CD4-positive, alpha-beta memory T cell (primary cell): ENCODE measurements at regions of chrX and their contacts with region 1.

Region 1: GRCh38 chrX:102950908-102951866 is 14.1 kb downstream of the RAB40AL start:
- DNase-seq: peak; percentile 44 to 59 (median 50)
- H3K4me3 ChIP-seq: no peak overlapping the region
- H3K4me3 Mint-ChIP-seq: peak overlapping the region; percentile 71 to 89 (median 80)
- H3K27ac ChIP-seq: no peak overlapping the region
- H3K27ac Mint-ChIP-seq: peak overlapping the region in 2 of 7 donors; percentile 15 to 30
- H3K4me1 ChIP-seq: no peaks in the 10 kb centered on the region
- H3K4me1 Mint-ChIP-seq: peaks cover 3 to 6% (median 5%) of the 10 kb centered on the region in 4 donors
- H3K27me3 ChIP-seq: no peaks in the 10 kb centered on the region
- H3K27me3 Mint-ChIP-seq: peaks cover 0 to 1% of the 10 kb centered on the region in 2 donors

Region 2: GRCh38 chrX:102697494-102697893 is 253.7 kb before region 1 on chrX:
- CTCF ChIA-PET with region 1: no interaction called
- POLR2A ChIA-PET with region 1: no interaction called
- intact Hi-C with region 1: no loop called
- DNase-seq: no peak
- H3K4me3 ChIP-seq: no peak overlapping the region
- H3K4me3 Mint-ChIP-seq: no peak overlapping the region
- H3K27ac ChIP-seq: no peak overlapping the region
- H3K27ac Mint-ChIP-seq: no peak overlapping the region
- H3K4me1 ChIP-seq: no peaks in the 10 kb centered on the region
- H3K4me1 Mint-ChIP-seq: no peaks in the 10 kb centered on the region
- H3K27me3 ChIP-seq: no peaks in the 10 kb centered on the region
- H3K27me3 Mint-ChIP-seq: no peaks in the 10 kb centered on the region

Region 3: GRCh38 chrX:102934624-102935023 is 16.6 kb before region 1 on chrX:
- CTCF ChIA-PET with region 1: interaction called, 15 read pairs
- POLR2A ChIA-PET with region 1: no interaction called
- intact Hi-C with region 1: no loop called
- DNase-seq: peak in 4 of 5 donors; percentile 17 to 39 (median 24)
- H3K4me3 ChIP-seq: no peak overlapping the region
- H3K4me3 Mint-ChIP-seq: no peak overlapping the region
- H3K27ac ChIP-seq: no peak overlapping the region
- H3K27ac Mint-ChIP-seq: no peak overlapping the region
- H3K4me1 ChIP-seq: no peaks in the 10 kb centered on the region
- H3K4me1 Mint-ChIP-seq: no peaks in the 10 kb centered on the region
- H3K27me3 ChIP-seq: no peaks in the 10 kb centered on the region
- H3K27me3 Mint-ChIP-seq: no peaks in the 10 kb centered on the region

Region 4: DNA sequence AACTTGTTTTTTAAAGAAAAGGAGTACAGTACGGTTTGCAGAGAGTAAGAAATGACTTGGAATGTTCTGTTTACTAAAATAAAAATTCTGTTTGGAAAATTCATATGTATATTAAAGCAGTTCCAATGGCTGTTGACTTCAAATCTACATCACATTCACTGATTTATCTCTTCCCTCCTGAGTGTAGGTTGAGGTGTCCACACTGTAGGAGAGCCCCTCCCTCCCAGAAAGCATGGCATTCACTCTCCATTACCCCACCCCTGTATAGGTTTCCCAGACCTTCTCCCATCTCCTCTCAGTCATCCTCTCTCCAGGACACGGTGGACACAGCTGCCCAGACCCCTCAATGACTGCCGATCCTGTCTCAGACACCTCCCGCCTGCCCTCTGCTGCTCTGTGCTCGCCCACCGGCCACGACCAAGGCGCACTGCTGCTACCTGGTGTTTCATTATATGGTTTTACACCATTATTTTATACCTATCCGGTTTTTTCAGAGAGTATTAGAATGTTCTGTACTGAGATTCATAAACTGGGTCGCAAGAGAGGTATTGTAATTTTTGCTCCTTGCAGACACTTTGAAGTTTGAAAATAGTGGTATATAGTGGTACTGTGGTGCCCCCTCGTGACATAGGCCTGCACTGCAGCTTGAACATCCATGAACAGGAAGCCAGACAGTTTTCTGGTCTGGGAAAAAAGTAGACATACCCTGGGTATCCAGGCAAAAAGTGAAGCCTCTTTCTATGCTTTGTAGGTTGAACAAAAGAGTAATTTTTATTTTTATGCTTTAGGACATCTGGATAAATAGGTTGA is 225.0 kb after region 1 on chrX:
- CTCF ChIA-PET with region 1: interaction called, 11 read pairs
- POLR2A ChIA-PET with region 1: no interaction called
- intact Hi-C with region 1: loop called (anchors 1 kb)
- DNase-seq: peak; percentile 40 to 60 (median 53)
- H3K4me3 ChIP-seq: no peak overlapping the region
- H3K4me3 Mint-ChIP-seq: peak overlapping the region in 3 of 8 donors; percentile 26 to 68 (median 47)
- H3K27ac ChIP-seq: no peak overlapping the region
- H3K27ac Mint-ChIP-seq: peak overlapping the region in 2 of 7 donors; percentile 6 to 20
- H3K4me1 ChIP-seq: no peaks in the 10 kb centered on the region
- H3K4me1 Mint-ChIP-seq: peaks cover 4% of the 10 kb centered on the region in 4 donors
- H3K27me3 ChIP-seq: no peaks in the 10 kb centered on the region
- H3K27me3 Mint-ChIP-seq: peaks cover 9 to 11% of the 10 kb centered on the region in 2 donors

Region 5: DNA sequence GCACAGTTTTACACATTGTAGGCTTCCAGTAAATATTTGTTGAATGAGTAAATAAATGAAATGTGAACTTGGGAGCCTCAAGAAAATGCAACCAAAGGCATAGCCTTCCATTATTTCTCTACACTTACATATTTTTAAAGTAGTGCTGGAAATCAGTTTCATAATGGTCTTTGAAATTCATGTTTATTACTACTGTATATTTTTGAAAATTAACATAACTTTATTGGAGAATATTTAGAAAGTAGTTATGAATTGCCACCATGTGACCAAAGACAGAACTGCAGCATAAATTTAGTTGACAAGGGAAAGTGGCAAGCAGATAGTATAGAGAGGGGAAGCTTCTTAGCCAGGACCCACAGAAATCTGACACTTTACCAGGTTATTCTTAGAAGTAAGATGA is 297.4 kb after region 1 on chrX:
- CTCF ChIA-PET with region 1: interaction called, 4 read pairs
- POLR2A ChIA-PET with region 1: no interaction called
- intact Hi-C with region 1: loop called (anchors 2 kb)
- DNase-seq: peak in 3 of 5 donors; percentile 10 to 19 (median 11)
- H3K4me3 ChIP-seq: no peak overlapping the region
- H3K4me3 Mint-ChIP-seq: no peak overlapping the region
- H3K27ac ChIP-seq: no peak overlapping the region
- H3K27ac Mint-ChIP-seq: no peak overlapping the region
- H3K4me1 ChIP-seq: peaks cover 4% of the 10 kb centered on the region
- H3K4me1 Mint-ChIP-seq: peaks cover 2 to 16% (median 6%) of the 10 kb centered on the region in 4 donors
- H3K27me3 ChIP-seq: no peaks in the 10 kb centered on the region
- H3K27me3 Mint-ChIP-seq: no peaks in the 10 kb centered on the region

Region 6: DNA sequence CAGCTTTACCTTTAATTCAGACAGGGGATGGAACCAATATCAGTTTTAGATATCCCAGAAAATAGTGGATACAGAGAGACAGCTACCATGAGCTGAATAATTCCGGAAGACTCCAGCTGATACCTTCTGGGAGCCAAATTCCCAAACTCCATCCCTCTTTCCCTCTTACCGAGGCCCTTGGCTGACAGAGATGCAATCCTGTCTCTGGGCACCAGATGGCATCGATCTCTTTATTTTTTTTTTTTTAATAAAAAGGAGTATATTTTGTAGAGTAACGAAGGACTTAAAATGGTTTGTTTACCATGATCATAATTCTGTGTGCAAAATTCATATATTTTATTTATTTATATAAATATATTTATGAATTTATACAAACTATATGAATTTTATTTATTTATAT is 537.1 kb after region 1 on chrX:
- CTCF ChIA-PET with region 1: interaction called, 21 read pairs
- POLR2A ChIA-PET with region 1: no interaction called
- intact Hi-C with region 1: loop called (anchors 1 kb)
- DNase-seq: no peak
- H3K4me3 ChIP-seq: no peak overlapping the region
- H3K4me3 Mint-ChIP-seq: no peak overlapping the region
- H3K27ac ChIP-seq: no peak overlapping the region
- H3K27ac Mint-ChIP-seq: no peak overlapping the region
- H3K4me1 ChIP-seq: peaks cover 4% of the 10 kb centered on the region
- H3K4me1 Mint-ChIP-seq: peaks cover 3 to 7% (median 5%) of the 10 kb centered on the region in 4 donors
- H3K27me3 ChIP-seq: no peaks in the 10 kb centered on the region
- H3K27me3 Mint-ChIP-seq: no peaks in the 10 kb centered on the region